ENCODE measurements at regions of chr1 and their contacts with region 1.

Region 1: GRCh38 chr1:169106095-169106920 is at the start of gene ATP1B1:
- DNase-seq: peak; percentile 94
- H3K4me3 ChIP-seq: peak within 1 kb of the TSS; percentile 69 to 99 (median 98)
- H3K27ac ChIP-seq: peak within 1 kb of the TSS; percentile 96 to 97 (median 97)
- H3K4me1 ChIP-seq: peaks cover 0 to 51% (median 39%) of the 10 kb centered on the region in 4 donors
- H3K27me3 ChIP-seq: no peaks in the 10 kb centered on the region
- CTCF ChIP-seq: peak in 3 of 4 experiments; percentile 37 to 66 (median 57)
- EP300 ChIP-seq: peak in 2 of 4 donors; percentile 6 to 35
- POLR2A ChIP-seq: peak; percentile 89 to 96
- total RNA-seq, gene ATP1B1: 92.4 to 118 (median 109) TPM

Region 2: GRCh38 chr1:168342572-168343280 is 763.6 kb before region 1 on chr1:
- intact Hi-C with region 1: loop called (anchors 5 kb)
- DNase-seq: peak; percentile 97
- H3K4me3 ChIP-seq: peak overlapping the region in 3 of 4 donors; percentile 2 to 32 (median 20)
- H3K27ac ChIP-seq: peak overlapping the region; percentile 48 to 72 (median 61)
- H3K4me1 ChIP-seq: peaks cover 0 to 26% (median 19%) of the 10 kb centered on the region in 4 donors
- H3K27me3 ChIP-seq: no peaks in the 10 kb centered on the region
- CTCF ChIP-seq: peak; percentile 70 to 82 (median 76)
- EP300 ChIP-seq: no peak
- POLR2A ChIP-seq: no peak

Region 3: GRCh38 chr1:168603501-168604110 is 502.7 kb before region 1 on chr1:
- intact Hi-C with region 1: loop called (anchors 5 kb)
- DNase-seq: peak; percentile 88
- H3K4me3 ChIP-seq: no peak overlapping the region
- H3K27ac ChIP-seq: peak overlapping the region in 1 of 4 donors; percentile 14
- H3K4me1 ChIP-seq: peaks cover 0 to 45% (median 15%) of the 10 kb centered on the region in 4 donors
- H3K27me3 ChIP-seq: no peaks in the 10 kb centered on the region
- CTCF ChIP-seq: peak; percentile 72 to 85 (median 79)
- EP300 ChIP-seq: no peak
- POLR2A ChIP-seq: no peak

Region 4: DNA sequence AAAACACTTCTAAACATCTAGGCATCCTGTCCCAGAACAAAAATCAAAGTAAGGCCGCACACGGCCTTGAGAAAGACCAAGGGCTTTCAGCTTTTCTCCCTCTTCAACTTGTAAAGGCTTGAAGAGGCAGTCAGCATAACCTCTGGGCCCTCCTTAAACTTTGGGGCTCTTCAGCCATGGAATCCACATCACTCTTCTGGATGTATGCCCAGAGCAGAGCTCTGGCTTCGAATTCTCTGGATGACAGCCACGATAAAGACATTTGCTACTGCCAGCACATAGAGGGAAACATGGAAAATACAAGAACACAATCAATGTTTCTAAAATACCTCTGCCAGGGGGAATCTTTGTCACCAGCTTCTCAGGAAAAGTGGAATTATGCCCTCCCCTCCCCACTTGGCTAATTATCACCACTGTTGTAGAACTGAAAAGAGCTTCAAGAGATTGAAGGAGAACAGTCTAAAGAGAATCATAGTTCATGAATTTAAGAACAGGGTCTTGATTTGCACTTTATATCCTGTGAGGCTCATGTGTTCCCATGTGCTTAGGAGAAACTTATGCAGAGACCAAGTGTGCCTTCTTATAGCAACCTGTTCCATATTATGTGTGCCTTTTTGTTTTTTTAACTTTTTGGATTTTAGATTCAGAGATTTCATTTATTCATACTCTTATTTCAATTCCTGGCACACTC is 338.3 kb before region 1 on chr1:
- intact Hi-C with region 1: loop called (anchors 5 kb)
- DNase-seq: peak; percentile 78
- H3K4me3 ChIP-seq: no peak overlapping the region
- H3K27ac ChIP-seq: peak overlapping the region; percentile 42 to 63 (median 54)
- H3K4me1 ChIP-seq: peaks cover 0 to 38% (median 22%) of the 10 kb centered on the region in 4 donors
- H3K27me3 ChIP-seq: no peaks in the 10 kb centered on the region
- CTCF ChIP-seq: no peak
- EP300 ChIP-seq: no peak
- POLR2A ChIP-seq: no peak

Region 5: GRCh38 chr1:169003864-169004516 is 102.3 kb before region 1 on chr1:
- intact Hi-C with region 1: no loop called
- DNase-seq: peak; percentile 71
- H3K4me3 ChIP-seq: no peak overlapping the region
- H3K27ac ChIP-seq: peak overlapping the region in 1 of 4 donors; percentile 16
- H3K4me1 ChIP-seq: peaks cover 0 to 11% (median 8%) of the 10 kb centered on the region in 4 donors
- H3K27me3 ChIP-seq: no peaks in the 10 kb centered on the region
- CTCF ChIP-seq: no peak
- EP300 ChIP-seq: no peak
- POLR2A ChIP-seq: no peak

Region 6: DNA sequence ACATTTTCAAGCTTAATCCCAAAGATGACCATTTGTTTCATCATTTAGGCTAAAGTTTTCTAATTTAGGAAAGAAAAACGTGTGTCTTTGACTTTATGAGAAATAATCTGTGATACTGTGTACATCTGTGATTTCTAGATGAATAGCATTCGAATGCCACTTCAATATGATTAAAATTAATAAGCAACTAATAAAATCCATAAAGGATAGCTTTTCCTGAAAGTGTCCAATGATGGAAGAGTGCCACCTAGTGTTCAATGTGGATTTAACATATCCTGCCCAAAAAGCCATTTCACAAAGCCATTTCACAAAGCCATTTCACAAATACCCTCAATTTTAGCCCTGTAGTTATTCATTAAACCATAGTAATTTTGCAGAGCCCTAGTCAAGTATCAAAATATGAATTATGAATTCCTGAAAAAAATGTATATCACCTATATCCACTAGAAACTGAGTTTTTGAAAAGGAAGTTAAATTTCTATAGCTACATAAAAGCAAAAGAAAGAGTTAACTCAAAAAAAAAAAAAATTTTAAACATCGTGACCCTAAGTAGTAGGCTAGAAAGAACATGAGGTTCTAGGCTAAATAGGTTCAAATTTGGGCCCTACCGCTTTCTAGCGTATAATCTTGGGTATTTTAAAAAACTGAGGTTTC is 242.2 kb after region 1 on chr1:
- intact Hi-C with region 1: loop called (anchors 5 kb)
- DNase-seq: no peak
- H3K4me3 ChIP-seq: no peak overlapping the region
- H3K27ac ChIP-seq: no peak overlapping the region
- H3K4me1 ChIP-seq: peaks cover 0 to 16% (median 3%) of the 10 kb centered on the region in 4 donors
- H3K27me3 ChIP-seq: no peaks in the 10 kb centered on the region
- CTCF ChIP-seq: peak; percentile 46 to 78 (median 68)
- EP300 ChIP-seq: no peak
- POLR2A ChIP-seq: no peak

Measured in sigmoid colon (tissue), 7 donors.